Activated CD4-positive, alpha-beta T cell treated with anti-CD3 and anti-CD28 coated beads, Interleukin-2, amount 10 ng/mL, durations not matched to agents 7 days and 5 days (primary cell): ENCODE measurements at regions of chr22 and their contacts with region 1.

Region 1: DNA sequence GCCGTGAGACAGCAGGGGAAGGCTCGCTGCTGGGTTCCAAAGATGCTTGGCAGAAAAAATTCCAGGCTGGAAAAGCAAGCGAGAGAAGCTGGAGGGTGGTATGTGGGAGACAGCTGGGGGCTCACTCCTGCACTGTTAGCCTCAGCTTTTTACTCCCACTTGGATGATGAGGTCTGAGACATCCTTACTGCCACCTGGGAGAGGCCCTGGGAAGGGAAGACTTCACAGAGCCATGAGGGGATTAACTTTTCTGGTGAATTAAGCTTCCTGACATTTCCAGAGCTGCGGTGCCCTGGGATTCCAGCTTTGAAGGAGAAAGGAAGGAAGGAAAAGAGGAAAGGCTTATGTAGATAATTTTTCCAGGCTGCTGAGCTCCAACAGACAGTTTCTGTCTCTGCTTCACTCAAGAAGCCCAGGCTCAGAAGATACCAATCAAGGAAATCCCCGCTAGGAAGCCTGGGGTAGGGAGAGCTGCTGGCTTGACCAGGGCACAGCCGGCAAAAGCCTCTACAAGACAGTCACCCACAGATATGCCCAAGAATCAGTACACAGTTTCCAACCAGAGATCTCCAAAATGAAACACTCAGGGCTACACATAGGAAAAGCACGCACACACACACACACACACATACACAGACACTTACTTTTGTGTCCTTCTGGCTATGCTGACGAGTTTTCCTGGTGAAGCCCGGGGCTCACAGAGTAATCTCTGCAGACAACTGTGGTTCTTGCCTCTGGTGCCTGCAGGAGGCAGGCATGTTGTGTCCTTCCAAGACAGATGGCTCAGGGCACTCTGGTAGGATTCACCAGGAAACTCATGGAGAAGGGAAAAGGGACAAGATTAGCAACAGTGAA is 907 bp downstream of the MCHR1 start:
- DNase-seq: no peak
- H3K4me3 Mint-ChIP-seq: no peak overlapping the region
- H3K27ac Mint-ChIP-seq: no peak overlapping the region
- H3K4me1 Mint-ChIP-seq: peaks cover 29% of the 10 kb centered on the region
- H3K27me3 Mint-ChIP-seq: peaks cover 14% of the 10 kb centered on the region

Region 2: GRCh38 chr22:40224702-40225101 is 455.5 kb before region 1 on chr22:
- CTCF ChIA-PET with region 1: no interaction called
- POLR2A ChIA-PET with region 1: no interaction called
- DNase-seq: no peak
- H3K4me3 Mint-ChIP-seq: no peak overlapping the region
- H3K27ac Mint-ChIP-seq: no peak overlapping the region
- H3K4me1 Mint-ChIP-seq: peaks cover 55% of the 10 kb centered on the region
- H3K27me3 Mint-ChIP-seq: no peaks in the 10 kb centered on the region

Region 3: GRCh38 chr22:40668611-40669411 is 11.4 kb before region 1 on chr22:
- CTCF ChIA-PET with region 1: interaction called, 13 read pairs
- POLR2A ChIA-PET with region 1: no interaction called
- DNase-seq: no peak
- H3K4me3 Mint-ChIP-seq: no peak overlapping the region
- H3K27ac Mint-ChIP-seq: peak overlapping the region; percentile 73
- H3K4me1 Mint-ChIP-seq: peaks cover 21% of the 10 kb centered on the region
- H3K27me3 Mint-ChIP-seq: no peaks in the 10 kb centered on the region

Region 4: DNA sequence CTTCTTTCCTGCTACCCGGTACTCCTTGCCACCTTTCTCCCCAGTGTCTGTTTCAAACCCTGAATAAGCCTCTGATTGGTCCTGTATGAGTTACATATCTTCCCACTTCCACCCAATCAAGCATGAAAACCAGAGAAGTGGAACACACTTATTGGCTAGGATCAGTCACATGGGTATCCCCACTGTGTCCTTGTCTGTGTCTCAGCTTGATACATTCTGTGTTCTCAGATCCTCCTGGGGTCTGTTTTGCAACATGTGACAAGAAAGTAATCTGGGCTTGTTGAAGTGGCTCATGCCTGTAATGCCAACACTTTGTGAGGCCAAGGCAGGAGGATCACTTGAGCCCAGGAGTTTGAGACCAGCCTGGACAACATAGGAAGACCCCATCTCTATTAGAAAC is 23.0 kb after region 1 on chr22:
- CTCF ChIA-PET with region 1: interaction called, 15 read pairs
- POLR2A ChIA-PET with region 1: no interaction called
- DNase-seq: no peak
- H3K4me3 Mint-ChIP-seq: no peak overlapping the region
- H3K27ac Mint-ChIP-seq: no peak overlapping the region
- H3K4me1 Mint-ChIP-seq: peaks cover 15% of the 10 kb centered on the region
- H3K27me3 Mint-ChIP-seq: peaks cover 2% of the 10 kb centered on the region

Region 5: DNA sequence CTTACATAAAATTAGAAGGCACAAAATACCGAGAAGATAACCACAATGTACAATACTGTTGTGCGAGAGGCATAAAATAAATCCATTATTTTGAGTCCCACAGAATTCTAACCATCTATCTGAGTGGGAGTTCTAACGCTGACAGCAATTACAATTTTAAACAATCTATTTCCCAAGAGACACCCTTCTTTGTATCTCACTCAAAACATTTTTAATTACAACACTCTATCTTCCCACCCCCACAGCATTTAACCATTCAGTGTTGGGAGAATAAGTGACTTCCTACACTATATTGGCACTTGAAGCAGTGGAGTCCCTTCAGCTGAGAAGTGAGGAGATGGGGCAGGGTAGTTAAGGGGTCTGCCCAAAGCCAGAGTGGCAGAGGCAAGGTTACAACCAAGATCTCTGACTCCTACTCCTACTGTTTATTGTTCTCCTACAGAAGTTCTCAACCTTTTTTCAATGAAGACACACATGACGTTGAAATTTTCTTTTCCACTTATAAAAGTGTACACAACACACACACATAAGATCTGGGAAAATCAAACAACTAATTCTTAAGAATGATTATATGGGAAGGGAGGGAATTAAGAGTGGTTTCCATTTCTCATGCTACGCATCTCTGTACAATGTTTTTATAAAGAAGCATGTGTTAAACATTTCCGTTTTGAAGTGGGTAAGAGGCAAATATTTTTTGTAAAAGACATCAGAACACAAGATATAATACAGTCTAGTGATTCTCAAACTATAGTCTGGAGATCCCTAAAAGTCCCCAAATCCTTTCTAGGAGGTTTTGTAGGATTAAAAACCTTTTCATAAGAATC is 128.0 kb after region 1 on chr22:
- CTCF ChIA-PET with region 1: interaction called, 11 read pairs
- POLR2A ChIA-PET with region 1: no interaction called
- DNase-seq: no peak
- H3K4me3 Mint-ChIP-seq: no peak overlapping the region
- H3K27ac Mint-ChIP-seq: no peak overlapping the region
- H3K4me1 Mint-ChIP-seq: peaks cover 1% of the 10 kb centered on the region
- H3K27me3 Mint-ChIP-seq: no peaks in the 10 kb centered on the region

Region 6: GRCh38 chr22:40898850-40899357 is 218.7 kb after region 1 on chr22:
- CTCF ChIA-PET with region 1: interaction called, 11 read pairs
- POLR2A ChIA-PET with region 1: interaction called, 7 read pairs
- DNase-seq: peak; percentile 27
- H3K4me3 Mint-ChIP-seq: no peak overlapping the region
- H3K27ac Mint-ChIP-seq: peak overlapping the region; percentile 23
- H3K4me1 Mint-ChIP-seq: peaks cover 8% of the 10 kb centered on the region
- H3K27me3 Mint-ChIP-seq: no peaks in the 10 kb centered on the region